Caco-2 (cell line): ENCODE measurements at regions of chr2 and their contacts with region 1.

Region 1: GRCh38 chr2:163132850-163133249 is 294.3 kb upstream of the KCNH7 start:
- DNase-seq: no peak
- H3K4me3 ChIP-seq: no peak overlapping the region
- H3K4me3 Mint-ChIP-seq: no peak overlapping the region
- H3K27ac Mint-ChIP-seq: no peak overlapping the region
- H3K4me1 ChIP-seq: no peaks in the 10 kb centered on the region
- H3K4me1 Mint-ChIP-seq: no peaks in the 10 kb centered on the region
- H3K27me3 ChIP-seq: no peaks in the 10 kb centered on the region
- H3K27me3 Mint-ChIP-seq: no peaks in the 10 kb centered on the region
- CTCF ChIP-seq: peak; percentile 32 to 39

Region 2: GRCh38 chr2:162890690-162891311 is 242.0 kb before region 1 on chr2:
- CTCF ChIA-PET with region 1: no interaction called
- POLR2A ChIA-PET with region 1: no interaction called
- intact Hi-C with region 1: loop called (anchors 1 kb)
- DNase-seq: peak; percentile 41 to 43
- H3K4me3 ChIP-seq: no peak overlapping the region
- H3K4me3 Mint-ChIP-seq: no peak overlapping the region
- H3K27ac Mint-ChIP-seq: no peak overlapping the region
- H3K4me1 ChIP-seq: no peaks in the 10 kb centered on the region
- H3K4me1 Mint-ChIP-seq: no peaks in the 10 kb centered on the region
- H3K27me3 ChIP-seq: no peaks in the 10 kb centered on the region
- H3K27me3 Mint-ChIP-seq: no peaks in the 10 kb centered on the region
- CTCF ChIP-seq: peak; percentile 82 to 83

Region 3: DNA sequence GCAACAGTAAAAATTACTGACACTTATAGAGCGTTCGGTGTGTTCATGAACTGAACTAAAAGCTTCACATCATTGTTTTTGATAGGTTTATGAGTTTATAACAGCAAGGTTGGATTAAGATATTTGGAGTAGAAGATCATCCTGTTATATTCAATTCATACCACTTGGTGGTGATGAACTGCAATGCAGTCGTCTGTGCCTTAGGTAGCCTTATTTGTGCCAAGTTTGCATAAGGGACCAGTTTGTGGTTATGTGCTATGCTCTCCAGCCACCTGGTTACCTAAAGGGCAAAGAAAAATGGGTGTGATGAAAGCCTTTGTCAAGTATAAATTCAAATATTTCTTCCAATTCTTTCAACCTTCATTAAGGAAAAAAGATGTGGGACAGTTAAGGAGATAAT is 143.3 kb before region 1 on chr2:
- CTCF ChIA-PET with region 1: no interaction called
- POLR2A ChIA-PET with region 1: no interaction called
- intact Hi-C with region 1: loop called (anchors 2 kb)
- DNase-seq: no peak
- H3K4me3 ChIP-seq: no peak overlapping the region
- H3K4me3 Mint-ChIP-seq: no peak overlapping the region
- H3K27ac Mint-ChIP-seq: no peak overlapping the region
- H3K4me1 ChIP-seq: no peaks in the 10 kb centered on the region
- H3K4me1 Mint-ChIP-seq: no peaks in the 10 kb centered on the region
- H3K27me3 ChIP-seq: no peaks in the 10 kb centered on the region
- H3K27me3 Mint-ChIP-seq: no peaks in the 10 kb centered on the region
- CTCF ChIP-seq: no peak

Region 4: GRCh38 chr2:163213661-163214389 is 81.0 kb after region 1 on chr2:
- CTCF ChIA-PET with region 1: no interaction called
- POLR2A ChIA-PET with region 1: no interaction called
- intact Hi-C with region 1: no loop called
- DNase-seq: no peak
- H3K4me3 ChIP-seq: no peak overlapping the region
- H3K4me3 Mint-ChIP-seq: no peak overlapping the region
- H3K27ac Mint-ChIP-seq: no peak overlapping the region
- H3K4me1 ChIP-seq: no peaks in the 10 kb centered on the region
- H3K4me1 Mint-ChIP-seq: no peaks in the 10 kb centered on the region
- H3K27me3 ChIP-seq: no peaks in the 10 kb centered on the region
- H3K27me3 Mint-ChIP-seq: no peaks in the 10 kb centered on the region
- CTCF ChIP-seq: no peak

Region 5: DNA sequence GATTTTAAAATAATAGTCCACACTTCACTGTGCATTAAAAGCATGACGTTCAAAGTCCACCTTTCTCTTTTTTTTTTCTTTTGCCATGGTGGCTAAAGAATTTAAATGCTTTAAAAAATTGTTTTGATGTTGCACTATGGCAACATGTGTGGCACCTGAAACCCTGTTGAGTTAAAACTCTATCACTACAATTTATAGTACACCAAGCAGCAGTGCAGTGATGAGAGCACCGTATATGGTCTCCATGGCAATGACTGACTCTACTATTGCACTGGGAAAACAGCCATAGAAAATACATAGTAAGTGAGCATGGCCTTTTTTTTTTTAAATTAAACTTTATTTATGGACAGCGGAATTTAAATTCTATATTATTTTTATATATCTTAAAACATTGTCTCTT is 304.1 kb after region 1 on chr2:
- CTCF ChIA-PET with region 1: no interaction called
- POLR2A ChIA-PET with region 1: no interaction called
- intact Hi-C with region 1: no loop called
- DNase-seq: no peak
- H3K4me3 ChIP-seq: no peak overlapping the region
- H3K4me3 Mint-ChIP-seq: no peak overlapping the region
- H3K27ac Mint-ChIP-seq: no peak overlapping the region
- H3K4me1 ChIP-seq: no peaks in the 10 kb centered on the region
- H3K4me1 Mint-ChIP-seq: no peaks in the 10 kb centered on the region
- H3K27me3 ChIP-seq: no peaks in the 10 kb centered on the region
- H3K27me3 Mint-ChIP-seq: no peaks in the 10 kb centered on the region
- CTCF ChIP-seq: no peak